Motor neuron (in vitro differentiated cells): ENCODE measurements at regions of chr7 and their contacts with region 1.

Region 1: GRCh38 chr7:3146571-3147226 is 103.0 kb upstream of the CARD11 start:
- ATAC-seq: peak in 5 of 8 experiments; percentile 49 to 78 (median 61)
- H3K4me3 ChIP-seq: no peak overlapping the region
- H3K27ac ChIP-seq: no peak overlapping the region
- H3K4me1 ChIP-seq: peaks cover 16 to 20% of the 10 kb centered on the region in 2 donors

Region 2: DNA sequence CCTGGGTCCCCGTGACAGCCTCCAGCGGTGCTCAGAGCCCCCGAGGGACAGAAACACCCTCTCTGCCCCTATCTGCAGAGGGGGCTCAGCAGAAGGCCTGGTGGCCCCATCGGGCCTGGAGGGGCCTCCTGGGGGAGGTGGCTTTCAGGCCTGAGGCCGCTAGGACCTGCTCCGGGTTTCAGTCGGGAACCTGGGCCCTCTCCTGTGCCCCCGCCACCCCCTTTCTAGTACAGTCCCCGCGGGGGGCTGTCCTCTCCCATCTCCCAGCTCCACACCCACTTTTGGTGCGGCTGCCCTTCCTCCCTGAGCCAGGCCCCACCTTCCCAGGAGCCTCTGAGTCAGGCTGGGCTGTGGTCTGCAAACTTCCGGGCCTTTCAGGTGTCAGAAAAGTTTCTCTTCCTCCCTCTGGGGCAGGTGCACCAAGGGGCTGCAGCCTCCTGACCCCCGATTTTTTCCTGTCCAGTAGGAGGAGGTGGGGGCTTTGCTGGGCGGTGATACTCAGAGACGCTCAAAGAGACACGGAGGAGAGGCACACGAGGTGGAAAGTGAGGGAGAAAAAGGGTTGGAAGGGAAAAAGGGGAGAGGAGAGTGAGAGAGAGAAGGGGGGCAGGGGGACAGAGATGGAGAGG is 103.7 kb before region 1 on chr7:
- in situ Hi-C with region 1: loop called in 1 of 9 experiments (anchors 25 kb)
- ATAC-seq: no peak
- H3K4me3 ChIP-seq: no peak overlapping the region
- H3K27ac ChIP-seq: no peak overlapping the region
- H3K4me1 ChIP-seq: no peaks in the 10 kb centered on the region